ENCODE measurements at regions of chr3 and their contacts with region 1.

Region 1: GRCh38 chr3:98522244-98523090 is at the start of gene CLDND1:
- DNase-seq: peak; percentile 98 to 99 (median 99)
- H3K4me3 ChIP-seq: peak within 1 kb of the TSS; percentile 59 to 98 (median 85)
- H3K27ac ChIP-seq: peak within 1 kb of the TSS; percentile 89 to 100 (median 97)
- H3K27me3 ChIP-seq: no peaks in the 10 kb centered on the region
- CTCF ChIP-seq: peak in 23 of 56 donors; percentile 2 to 50 (median 29)
- total RNA-seq, gene CLDND1: 175 to 2,533 (median 594) TPM

Region 2: DNA sequence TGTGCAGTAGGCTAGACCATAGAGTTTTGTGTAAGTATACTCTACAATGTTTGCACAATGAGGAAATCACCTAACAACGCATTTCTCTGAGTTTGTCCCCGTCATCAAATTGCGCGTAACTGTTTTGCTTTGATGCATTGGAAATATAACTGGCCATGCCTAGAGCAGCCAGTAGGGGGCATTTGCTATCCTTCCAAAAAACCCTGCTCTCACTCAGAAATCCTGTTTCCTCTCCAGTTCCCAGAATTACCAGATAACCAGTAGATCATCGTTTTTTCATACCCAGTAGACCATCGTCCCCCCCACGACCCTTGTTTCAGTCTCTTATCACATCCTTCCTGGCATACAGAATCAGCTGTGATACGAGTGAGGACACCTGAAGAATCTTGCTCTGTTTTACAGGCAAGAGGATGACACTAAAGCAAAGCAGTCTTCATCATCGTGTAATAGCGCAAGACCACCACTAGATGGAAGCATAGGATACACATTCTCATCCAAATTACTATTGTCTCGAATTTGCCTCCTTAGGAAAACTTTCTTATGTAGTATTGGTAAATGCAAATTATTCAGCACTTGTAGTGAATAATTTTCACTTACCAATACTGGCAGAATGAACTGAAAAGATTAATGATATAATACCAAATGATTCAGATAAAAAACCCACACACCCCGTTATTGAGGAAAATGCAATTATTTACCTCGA is 483.0 kb before region 1 on chr3:
- intact Hi-C with region 1: loop called in 1 of 2 experiments (anchors 5 kb)
- DNase-seq: peak in 9 of 10 donors; percentile 16 to 76 (median 49)
- H3K4me3 ChIP-seq: peak overlapping the region; percentile 17 to 68 (median 52)
- H3K27ac ChIP-seq: peak overlapping the region in 27 of 59 donors; percentile 20 to 81 (median 59)
- H3K27me3 ChIP-seq: peaks cover 0 to 13% (median 0%) of the 10 kb centered on the region in 45 donors
- CTCF ChIP-seq: peak in 54 of 56 donors; percentile 84 to 100 (median 96)

Region 3: GRCh38 chr3:98343647-98344507 is 178.6 kb before region 1 on chr3:
- intact Hi-C with region 1: loop called (anchors 5 to 10 kb)
- DNase-seq: no peak
- H3K4me3 ChIP-seq: no peak overlapping the region
- H3K27ac ChIP-seq: no peak overlapping the region
- H3K27me3 ChIP-seq: no peaks in the 10 kb centered on the region
- CTCF ChIP-seq: peak in 50 of 56 donors; percentile 8 to 57 (median 38)

Region 4: DNA sequence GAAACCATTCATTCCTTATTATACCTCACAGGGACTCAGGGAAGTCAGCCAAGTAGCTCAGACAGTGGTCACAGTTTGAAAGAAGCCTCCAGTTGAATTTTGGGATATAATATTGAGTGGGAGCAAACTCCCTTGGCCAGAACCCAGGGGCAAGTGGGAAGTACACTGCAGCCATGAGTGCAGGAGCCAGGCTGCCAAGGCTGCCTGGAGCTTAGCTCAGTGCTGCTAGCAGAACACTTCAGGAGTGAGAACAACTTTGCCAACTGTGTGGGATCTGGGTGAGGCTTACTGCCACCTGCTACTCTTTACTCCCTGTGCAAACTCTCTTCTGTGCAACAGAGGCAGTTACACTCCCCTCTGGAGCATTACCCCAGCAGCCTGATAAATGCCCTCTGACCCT is 127.4 kb before region 1 on chr3:
- intact Hi-C with region 1: no loop called
- DNase-seq: peak in 7 of 10 donors; percentile 23 to 68 (median 54)
- H3K4me3 ChIP-seq: no peak overlapping the region
- H3K27ac ChIP-seq: peak overlapping the region in 1 of 59 donors; percentile 11
- H3K27me3 ChIP-seq: no peaks in the 10 kb centered on the region
- CTCF ChIP-seq: no peak

Region 5: DNA sequence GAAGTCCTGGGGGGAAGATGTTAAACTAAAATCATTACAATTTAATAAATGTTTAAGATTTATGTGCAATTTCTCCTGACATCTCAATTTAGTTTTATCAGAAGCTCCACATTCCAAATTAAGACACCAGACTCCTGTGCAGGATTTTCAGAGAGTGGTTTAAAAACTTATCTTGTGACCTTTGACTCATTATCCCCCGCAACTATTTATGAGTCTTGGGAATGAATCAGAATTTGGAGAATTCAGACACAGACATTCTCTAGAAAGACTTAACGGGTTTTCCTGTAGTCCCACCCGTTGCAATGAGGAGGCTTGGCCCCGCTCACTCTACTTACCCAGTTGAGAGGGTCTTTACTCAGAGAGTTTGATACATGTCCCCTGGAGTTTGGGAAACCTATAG is 17.9 kb before region 1 on chr3:
- intact Hi-C with region 1: no loop called
- DNase-seq: no peak
- H3K4me3 ChIP-seq: no peak overlapping the region
- H3K27ac ChIP-seq: no peak overlapping the region
- H3K27me3 ChIP-seq: no peaks in the 10 kb centered on the region
- CTCF ChIP-seq: no peak

Measured in dorsolateral prefrontal cortex (tissue), 120 donors.